Activated naive CD4-positive, alpha-beta T cell treated with anti-CD3 and anti-CD28 coated beads for 36 hours (primary cell): ENCODE measurements at regions of chr3 and their contacts with region 1.

Region 1: DNA sequence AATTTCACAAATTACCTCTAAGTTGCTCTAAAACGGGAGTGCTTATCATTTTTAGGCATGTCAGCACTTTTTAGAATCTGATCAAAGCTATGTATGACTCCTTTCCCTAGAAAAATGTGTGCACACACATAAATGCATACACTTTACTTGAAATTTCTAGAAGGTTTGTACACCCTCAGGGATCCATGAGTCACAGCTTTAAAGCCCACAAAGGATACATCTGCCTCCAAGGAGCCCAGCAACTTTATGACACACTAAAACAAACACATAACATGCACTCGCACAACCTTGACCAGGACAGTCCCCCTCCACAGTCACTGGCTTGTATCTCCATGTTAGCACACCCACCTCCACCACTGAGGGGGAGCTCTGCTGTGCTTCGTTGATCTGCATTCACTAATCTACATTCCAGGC is 722.0 kb upstream of the CFAP20DC start:
- DNase-seq: no peak
- H3K4me3 Mint-ChIP-seq: no peak overlapping the region
- H3K27ac Mint-ChIP-seq: no peak overlapping the region
- H3K4me1 Mint-ChIP-seq: peaks cover 37% of the 10 kb centered on the region
- H3K27me3 Mint-ChIP-seq: no peaks in the 10 kb centered on the region

Region 2: DNA sequence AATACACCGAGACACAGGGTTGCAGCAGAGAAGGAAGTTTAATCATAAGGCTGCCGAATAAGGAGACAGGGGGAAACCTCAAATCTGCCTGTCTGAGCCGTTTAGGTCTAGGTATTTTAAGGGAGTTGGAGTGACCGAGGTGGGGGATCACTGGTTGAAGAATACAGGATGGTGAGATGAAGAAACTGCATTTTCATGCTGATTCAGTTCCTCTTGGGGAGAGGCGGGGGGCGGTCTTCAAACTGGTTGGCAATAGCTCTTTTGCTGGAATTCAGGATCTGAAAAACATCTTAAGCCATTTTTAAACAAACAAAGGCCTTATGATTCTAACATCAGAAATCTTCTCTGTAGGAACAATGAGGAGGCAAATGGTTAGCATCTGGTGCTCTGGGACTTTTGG is 22.5 kb before region 1 on chr3:
- CTCF ChIA-PET with region 1: no interaction called
- intact Hi-C with region 1: no loop called
- DNase-seq: no peak
- H3K4me3 Mint-ChIP-seq: no peak overlapping the region
- H3K27ac Mint-ChIP-seq: no peak overlapping the region
- H3K4me1 Mint-ChIP-seq: peaks cover 17% of the 10 kb centered on the region
- H3K27me3 Mint-ChIP-seq: no peaks in the 10 kb centered on the region

Region 3: GRCh38 chr3:59839810-59840515 is 68.2 kb after region 1 on chr3:
- CTCF ChIA-PET with region 1: no interaction called
- intact Hi-C with region 1: loop called (anchors 5 kb)
- DNase-seq: peak; percentile 47
- H3K4me3 Mint-ChIP-seq: no peak overlapping the region
- H3K27ac Mint-ChIP-seq: no peak overlapping the region
- H3K4me1 Mint-ChIP-seq: peaks cover 43% of the 10 kb centered on the region
- H3K27me3 Mint-ChIP-seq: no peaks in the 10 kb centered on the region